Activated CD4-positive, alpha-beta T cell treated with anti-CD3 and anti-CD28 coated beads, Interleukin-2, amount 10 ng/mL, durations not matched to agents 24 days and 14 days (primary cell): ENCODE measurements at regions of chr4 and their contacts with region 1.

Region 1: DNA sequence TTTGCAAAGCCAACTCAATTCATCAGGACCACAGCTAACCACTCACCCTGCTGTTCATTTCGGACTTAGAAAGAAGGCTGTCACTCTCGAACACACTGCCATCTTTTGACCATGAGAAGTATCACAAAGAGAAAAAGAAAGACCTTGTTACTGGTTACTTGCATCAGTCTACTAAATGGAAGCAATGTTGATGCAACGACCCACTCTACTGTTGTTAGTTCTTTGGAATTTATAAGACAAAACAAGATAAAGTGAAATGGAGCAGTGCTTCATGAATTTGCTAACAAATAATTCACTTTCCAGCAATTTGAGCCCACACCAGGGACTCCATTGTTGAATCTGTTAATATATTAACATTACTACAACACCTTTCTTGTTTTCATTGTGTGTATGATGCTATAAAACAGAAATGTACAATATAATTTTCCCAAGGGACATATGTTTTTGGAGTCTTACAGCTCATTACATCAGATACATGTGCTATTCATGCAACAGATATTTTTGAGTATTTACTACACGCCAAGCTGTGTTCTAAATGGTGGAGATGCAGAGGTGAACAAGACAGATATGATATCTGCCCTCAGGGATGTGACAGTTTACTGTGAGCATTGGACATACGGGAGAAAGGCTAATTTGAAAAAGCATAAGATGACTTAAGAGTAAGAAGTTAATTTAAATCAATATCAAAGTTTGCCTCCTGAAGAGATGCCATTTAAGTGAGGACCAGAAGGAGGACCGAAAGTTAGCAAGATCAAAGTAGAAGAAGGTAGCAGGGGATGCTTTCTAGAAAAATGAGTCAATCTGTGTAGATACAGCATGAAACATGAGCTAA is 87.2 kb downstream of the AREG start:
- DNase-seq: peak; percentile 62
- H3K4me3 Mint-ChIP-seq: no peak overlapping the region
- H3K27ac Mint-ChIP-seq: no peak overlapping the region
- H3K4me1 Mint-ChIP-seq: no peaks in the 10 kb centered on the region
- H3K27me3 Mint-ChIP-seq: peaks cover 4% of the 10 kb centered on the region

Region 2: DNA sequence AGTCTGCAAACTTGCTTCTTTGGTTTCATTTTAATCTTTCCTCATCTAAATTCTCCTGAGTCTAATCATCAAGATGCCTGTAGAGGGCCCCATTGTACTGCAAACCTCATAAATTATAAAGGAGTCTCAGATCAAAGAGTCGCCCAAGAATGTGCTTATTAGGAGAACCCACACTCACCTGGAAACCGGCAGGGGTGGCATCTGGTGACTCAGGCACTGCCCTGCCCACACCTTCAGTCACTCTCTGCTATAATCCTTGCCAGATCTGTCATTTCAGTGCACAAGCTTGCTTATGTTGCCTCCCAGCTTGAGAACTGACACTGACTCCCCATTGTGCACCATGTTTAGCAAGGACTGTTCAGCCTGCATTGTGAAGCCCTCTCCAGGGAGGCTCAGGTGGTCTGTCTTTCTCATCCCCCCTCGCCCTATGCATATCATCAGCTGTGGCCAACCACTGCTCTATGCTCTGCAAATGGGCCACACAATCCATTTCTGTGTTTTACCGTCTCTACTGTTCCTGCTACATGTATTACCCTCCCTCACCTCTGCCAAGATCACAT is 211.5 kb before region 1 on chr4:
- intact Hi-C with region 1: loop called (anchors 5 kb)
- DNase-seq: peak; percentile 65
- H3K4me3 Mint-ChIP-seq: no peak overlapping the region
- H3K27ac Mint-ChIP-seq: no peak overlapping the region
- H3K4me1 Mint-ChIP-seq: peaks cover 1% of the 10 kb centered on the region
- H3K27me3 Mint-ChIP-seq: peaks cover 23% of the 10 kb centered on the region

Region 3: DNA sequence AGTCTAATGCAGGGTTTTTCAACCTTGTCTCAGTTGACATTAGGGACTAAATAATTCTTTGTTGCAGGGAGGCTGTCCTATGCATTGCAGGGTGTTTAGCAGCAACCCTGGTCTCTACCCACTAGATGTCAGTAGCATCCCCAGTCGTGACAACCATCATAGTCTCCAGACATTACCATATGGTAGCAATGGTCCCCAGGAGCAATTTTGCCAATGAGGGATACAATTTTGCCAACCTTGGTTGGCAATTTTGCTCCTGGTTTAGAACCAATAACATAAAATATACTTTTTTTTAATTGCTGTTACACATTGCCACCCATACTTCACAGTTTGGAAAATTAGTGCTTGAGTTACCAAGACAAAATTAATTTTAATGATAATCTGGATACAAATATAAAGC is 161.3 kb before region 1 on chr4:
- intact Hi-C with region 1: loop called (anchors 2 kb)
- DNase-seq: peak; percentile 75
- H3K4me3 Mint-ChIP-seq: no peak overlapping the region
- H3K27ac Mint-ChIP-seq: no peak overlapping the region
- H3K4me1 Mint-ChIP-seq: peaks cover 2% of the 10 kb centered on the region
- H3K27me3 Mint-ChIP-seq: peaks cover 15% of the 10 kb centered on the region